Panc1 (cell line): ENCODE measurements at regions of chr15 and their contacts with region 1.

Region 1: DNA sequence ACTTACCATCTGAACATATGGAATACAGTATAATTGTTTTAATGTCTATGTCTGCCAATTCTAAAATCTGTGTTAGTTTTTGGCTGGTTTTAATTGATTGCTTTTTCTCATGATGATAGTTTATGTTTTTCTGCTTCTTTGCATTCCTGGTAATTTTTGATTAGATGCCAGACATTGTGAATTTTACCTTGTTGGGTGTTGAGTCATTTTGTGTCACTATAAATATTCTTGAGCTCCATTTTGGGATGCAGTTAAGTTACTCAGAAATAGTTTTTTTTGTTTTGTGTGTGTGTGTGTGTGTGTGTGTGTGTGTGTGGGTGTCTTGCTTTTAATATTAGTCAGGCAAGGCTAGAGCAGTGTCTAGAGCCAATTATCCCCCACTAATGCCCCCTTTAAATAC is 818.8 kb upstream of the NR2F2 start:
- DNase-seq: no peak
- ATAC-seq: no peak
- H3K4me3 ChIP-seq: no peak overlapping the region
- H3K27ac ChIP-seq: no peak overlapping the region
- H3K4me1 ChIP-seq: no peaks in the 10 kb centered on the region
- H3K27me3 ChIP-seq: no peaks in the 10 kb centered on the region
- CTCF ChIP-seq: no peak

Region 2: GRCh38 chr15:95494971-95495541 is 16.6 kb before region 1 on chr15:
- CTCF ChIA-PET with region 1: no interaction called
- POLR2A ChIA-PET with region 1: no interaction called
- in situ Hi-C with region 1: no loop called
- intact Hi-C with region 1: no loop called
- DNase-seq: no peak
- ATAC-seq: no peak
- H3K4me3 ChIP-seq: no peak overlapping the region
- H3K27ac ChIP-seq: no peak overlapping the region
- H3K4me1 ChIP-seq: no peaks in the 10 kb centered on the region
- H3K27me3 ChIP-seq: no peaks in the 10 kb centered on the region
- CTCF ChIP-seq: no peak

Region 3: DNA sequence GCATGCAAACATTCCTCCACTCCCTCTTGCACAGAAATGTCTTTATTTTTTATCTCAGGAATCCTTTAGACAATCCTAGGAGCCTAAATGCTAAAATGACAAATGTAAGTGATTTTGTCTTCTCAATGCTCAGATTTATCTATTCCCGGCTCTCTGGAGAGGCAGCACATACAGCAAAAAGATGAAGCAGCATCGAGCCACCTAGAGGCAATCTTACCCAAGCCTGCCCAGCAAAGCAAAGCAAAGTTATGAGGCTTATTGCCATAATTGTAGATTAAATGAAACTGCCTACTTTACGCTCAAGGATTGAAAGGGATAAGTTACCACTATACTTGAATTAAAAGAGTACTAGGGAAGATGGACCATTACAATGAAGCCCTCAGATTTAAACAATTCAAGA is 68.5 kb after region 1 on chr15:
- CTCF ChIA-PET with region 1: interaction called, 15 read pairs
- POLR2A ChIA-PET with region 1: no interaction called
- in situ Hi-C with region 1: no loop called
- intact Hi-C with region 1: no loop called
- DNase-seq: no peak
- ATAC-seq: no peak
- H3K4me3 ChIP-seq: no peak overlapping the region
- H3K27ac ChIP-seq: no peak overlapping the region
- H3K4me1 ChIP-seq: no peaks in the 10 kb centered on the region
- H3K27me3 ChIP-seq: no peaks in the 10 kb centered on the region
- CTCF ChIP-seq: peak; percentile 23

Region 4: DNA sequence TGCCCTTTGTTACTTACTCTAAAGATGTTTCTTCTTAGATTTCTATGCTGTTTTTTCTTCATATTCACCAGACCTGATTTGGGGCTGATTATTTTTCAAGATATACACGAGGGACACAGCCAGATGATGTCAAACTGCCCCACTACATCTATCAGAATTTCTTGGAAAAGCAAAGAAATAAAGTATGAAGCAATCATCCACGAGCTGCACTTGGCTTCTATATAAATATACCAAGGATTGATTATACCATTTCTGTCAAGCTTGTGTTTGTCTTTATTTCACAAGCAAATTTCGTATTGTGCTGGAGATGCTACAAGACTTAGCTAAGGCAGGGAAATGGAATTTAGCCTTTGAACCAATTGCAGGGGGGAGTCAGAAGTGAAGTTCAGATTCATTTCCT is 103.8 kb after region 1 on chr15:
- CTCF ChIA-PET with region 1: no interaction called
- POLR2A ChIA-PET with region 1: no interaction called
- in situ Hi-C with region 1: no loop called
- intact Hi-C with region 1: no loop called
- DNase-seq: no peak
- ATAC-seq: no peak
- H3K4me3 ChIP-seq: no peak overlapping the region
- H3K27ac ChIP-seq: no peak overlapping the region
- H3K4me1 ChIP-seq: no peaks in the 10 kb centered on the region
- H3K27me3 ChIP-seq: no peaks in the 10 kb centered on the region
- CTCF ChIP-seq: no peak

Region 5: DNA sequence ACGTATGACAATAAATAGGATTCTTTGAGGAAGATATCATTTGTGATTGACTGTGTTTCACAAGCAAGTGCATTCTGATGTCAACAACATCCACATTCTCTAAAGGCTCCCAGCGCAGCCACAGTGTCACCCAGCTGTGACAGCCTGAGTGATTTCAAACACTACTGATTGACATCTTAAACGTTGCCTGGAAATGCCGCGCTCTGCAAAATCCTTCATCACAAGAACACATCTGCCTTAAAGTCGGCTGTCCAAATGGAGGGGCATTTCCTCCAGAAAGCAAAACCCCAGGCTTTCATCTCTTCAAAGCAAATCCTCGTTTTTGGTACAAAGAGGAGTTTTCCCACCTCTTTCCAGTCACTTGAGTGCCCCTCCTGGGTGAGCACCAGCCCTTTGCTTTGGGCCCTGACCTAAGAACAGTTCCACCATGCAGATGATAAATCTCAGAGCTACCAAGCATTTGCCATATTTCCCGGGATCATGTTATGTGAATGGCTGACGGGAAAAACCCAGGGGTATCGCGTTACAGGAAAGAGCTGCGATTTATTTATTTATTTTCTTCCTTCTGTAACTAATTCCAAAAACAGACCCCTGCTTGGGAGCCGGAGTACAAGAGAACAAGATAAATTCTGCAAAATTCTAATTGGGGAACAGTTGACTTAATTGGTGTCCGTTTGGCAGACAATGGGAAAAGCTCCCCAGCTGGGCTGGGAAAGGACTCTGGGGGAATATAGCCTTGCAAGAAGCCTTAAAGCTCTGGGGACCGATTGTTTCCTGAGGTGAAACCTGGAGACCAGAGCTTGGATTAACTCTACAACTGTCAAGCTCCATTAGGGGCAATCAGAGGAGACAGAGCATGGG is 115.1 kb after region 1 on chr15:
- CTCF ChIA-PET with region 1: no interaction called
- POLR2A ChIA-PET with region 1: interaction called, 10 read pairs
- in situ Hi-C with region 1: no loop called
- intact Hi-C with region 1: no loop called
- DNase-seq: no peak
- ATAC-seq: no peak
- H3K4me3 ChIP-seq: no peak overlapping the region
- H3K27ac ChIP-seq: no peak overlapping the region
- H3K4me1 ChIP-seq: no peaks in the 10 kb centered on the region
- H3K27me3 ChIP-seq: no peaks in the 10 kb centered on the region
- CTCF ChIP-seq: no peak

Region 6: DNA sequence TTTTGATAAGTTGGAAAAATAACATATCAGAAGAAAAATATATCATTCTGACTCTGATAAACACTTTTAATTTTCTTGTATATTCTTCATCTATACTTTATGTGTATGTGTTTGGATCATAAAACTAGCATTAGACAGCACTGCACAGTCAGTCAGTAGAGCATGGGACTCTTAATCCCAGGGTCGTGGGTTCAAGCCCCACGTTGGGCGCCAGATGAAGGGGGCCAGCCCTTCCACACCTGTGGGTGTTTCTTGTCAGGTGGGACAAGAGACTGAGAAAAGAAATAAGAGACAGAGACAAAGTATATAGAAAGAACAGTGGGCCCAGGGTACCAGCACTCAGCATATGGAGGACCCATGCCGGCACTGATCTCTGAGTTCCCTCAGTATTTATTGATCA is 272.8 kb after region 1 on chr15:
- CTCF ChIA-PET with region 1: no interaction called
- POLR2A ChIA-PET with region 1: no interaction called
- in situ Hi-C with region 1: no loop called
- intact Hi-C with region 1: no loop called
- DNase-seq: no peak
- ATAC-seq: no peak
- H3K4me3 ChIP-seq: no peak overlapping the region
- H3K27ac ChIP-seq: no peak overlapping the region
- H3K4me1 ChIP-seq: no peaks in the 10 kb centered on the region
- H3K27me3 ChIP-seq: no peaks in the 10 kb centered on the region
- CTCF ChIP-seq: no peak